ENCODE measurements at regions of chr6 and their contacts with region 1.

Region 1: GRCh38 chr6:46993846-46994245 is 48.3 kb downstream of the ADGRF1 start:
- DNase-seq: peak; percentile 81
- H3K4me3 Mint-ChIP-seq: no peak overlapping the region
- H3K27ac Mint-ChIP-seq: peak overlapping the region; percentile 82
- H3K4me1 Mint-ChIP-seq: peaks cover 34% of the 10 kb centered on the region
- H3K27me3 Mint-ChIP-seq: no peaks in the 10 kb centered on the region
- CTCF ChIP-seq: no peak

Region 2: DNA sequence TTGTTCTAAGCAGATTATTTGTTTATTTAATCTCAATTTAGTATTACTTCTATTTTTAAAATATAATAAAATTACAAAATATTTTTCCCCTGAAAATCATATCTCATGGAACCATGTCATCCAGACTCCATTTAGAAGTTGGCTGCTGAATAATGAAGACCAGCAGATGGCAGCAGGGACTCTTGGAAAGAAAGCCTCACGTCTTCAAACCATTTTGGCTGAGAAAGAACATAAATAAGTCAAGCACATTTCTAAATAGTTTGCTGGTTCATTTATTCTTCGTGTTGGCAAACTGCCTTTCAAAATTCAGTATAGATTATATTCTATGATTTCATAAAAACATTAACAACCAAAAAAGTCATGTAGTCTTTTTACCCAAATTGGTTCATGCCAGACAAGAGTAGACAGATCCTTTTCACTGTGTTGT is 574.3 kb before region 1 on chr6:
- CTCF ChIA-PET with region 1: interaction called, 16 read pairs
- POLR2A ChIA-PET with region 1: no interaction called
- intact Hi-C with region 1: loop called (anchors 1 kb)
- DNase-seq: peak; percentile 78
- H3K4me3 Mint-ChIP-seq: no peak overlapping the region
- H3K27ac Mint-ChIP-seq: no peak overlapping the region
- H3K4me1 Mint-ChIP-seq: peaks cover 7% of the 10 kb centered on the region
- H3K27me3 Mint-ChIP-seq: peaks cover 11% of the 10 kb centered on the region
- CTCF ChIP-seq: peak; percentile 73

Region 3: DNA sequence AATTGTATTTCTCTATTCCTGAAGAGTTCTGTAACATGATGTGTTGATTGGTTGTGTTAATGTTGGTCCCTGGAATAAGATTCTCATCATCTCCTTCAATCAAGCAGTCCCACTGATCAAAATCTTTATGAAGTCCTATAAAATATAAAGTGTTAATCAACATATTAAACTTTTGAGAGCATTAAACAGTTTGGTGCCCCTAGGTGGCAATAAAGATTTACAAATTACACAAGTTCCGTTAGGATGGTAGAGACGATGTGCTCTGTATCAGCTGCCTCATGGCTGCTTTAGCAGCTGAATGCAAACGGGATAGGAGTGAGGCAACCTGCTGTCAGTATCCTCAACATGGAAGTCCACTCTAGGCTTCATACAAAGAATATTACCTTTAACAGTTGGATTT is 289.3 kb before region 1 on chr6:
- CTCF ChIA-PET with region 1: interaction called, 5 read pairs
- POLR2A ChIA-PET with region 1: no interaction called
- intact Hi-C with region 1: loop called (anchors 1 kb)
- DNase-seq: peak; percentile 53
- H3K4me3 Mint-ChIP-seq: no peak overlapping the region
- H3K27ac Mint-ChIP-seq: no peak overlapping the region
- H3K4me1 Mint-ChIP-seq: peaks cover 1% of the 10 kb centered on the region
- H3K27me3 Mint-ChIP-seq: no peaks in the 10 kb centered on the region
- CTCF ChIP-seq: peak; percentile 38

Region 4: GRCh38 chr6:46862381-46862780 is 131.5 kb before region 1 on chr6:
- CTCF ChIA-PET with region 1: interaction called, 12 read pairs
- POLR2A ChIA-PET with region 1: no interaction called
- intact Hi-C with region 1: no loop called
- DNase-seq: no peak
- H3K4me3 Mint-ChIP-seq: no peak overlapping the region
- H3K27ac Mint-ChIP-seq: no peak overlapping the region
- H3K4me1 Mint-ChIP-seq: no peaks in the 10 kb centered on the region
- H3K27me3 Mint-ChIP-seq: no peaks in the 10 kb centered on the region
- CTCF ChIP-seq: no peak

Region 5: GRCh38 chr6:47009566-47009965 is 15.7 kb after region 1 on chr6:
- CTCF ChIA-PET with region 1: no interaction called
- POLR2A ChIA-PET with region 1: no interaction called
- intact Hi-C with region 1: no loop called
- DNase-seq: no peak
- H3K4me3 Mint-ChIP-seq: no peak overlapping the region
- H3K27ac Mint-ChIP-seq: no peak overlapping the region
- H3K4me1 Mint-ChIP-seq: peaks cover 3% of the 10 kb centered on the region
- H3K27me3 Mint-ChIP-seq: no peaks in the 10 kb centered on the region
- CTCF ChIP-seq: no peak

Region 6: DNA sequence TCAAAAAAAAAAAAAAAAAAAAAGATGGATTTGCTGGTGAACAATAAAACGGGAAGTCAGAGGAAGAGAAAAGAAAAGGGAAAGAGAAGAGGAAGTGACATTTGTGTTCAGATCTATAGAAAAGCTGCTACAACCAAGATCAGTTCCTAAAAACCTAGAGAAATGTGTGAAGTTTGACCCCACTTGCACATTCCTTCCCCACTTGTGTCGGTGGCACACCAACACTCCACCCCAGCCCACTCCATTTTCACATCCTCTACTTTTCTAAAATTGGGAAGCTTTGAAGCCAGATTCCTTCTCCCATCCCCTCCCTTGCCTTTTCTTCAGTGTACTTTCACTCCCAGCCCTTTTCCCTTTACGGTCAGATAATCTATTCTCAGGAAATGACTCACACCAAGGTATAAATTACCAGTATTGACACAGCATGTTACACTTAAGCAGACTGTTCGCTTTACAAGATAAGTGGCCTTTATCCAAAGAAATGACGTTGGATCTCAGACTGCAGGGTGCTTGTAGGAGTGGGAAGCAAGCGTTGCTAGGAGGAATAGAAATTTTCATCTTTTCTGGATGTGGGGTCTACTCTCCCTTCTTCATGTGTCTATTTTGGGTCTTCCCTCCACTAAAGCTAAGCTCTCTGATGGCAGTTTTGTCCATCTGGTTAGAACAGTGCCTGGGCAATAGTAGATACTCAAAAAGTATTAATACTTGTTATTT is 140.8 kb after region 1 on chr6:
- CTCF ChIA-PET with region 1: no interaction called
- POLR2A ChIA-PET with region 1: no interaction called
- intact Hi-C with region 1: no loop called
- DNase-seq: peak; percentile 95
- H3K4me3 Mint-ChIP-seq: peak overlapping the region; percentile 35
- H3K27ac Mint-ChIP-seq: peak overlapping the region; percentile 80
- H3K4me1 Mint-ChIP-seq: peaks cover 34% of the 10 kb centered on the region
- H3K27me3 Mint-ChIP-seq: no peaks in the 10 kb centered on the region
- CTCF ChIP-seq: no peak

Measured in MCF 10A (cell line).